ENCODE measurements at regions of chr1 and their contacts with region 1.

Region 1: DNA sequence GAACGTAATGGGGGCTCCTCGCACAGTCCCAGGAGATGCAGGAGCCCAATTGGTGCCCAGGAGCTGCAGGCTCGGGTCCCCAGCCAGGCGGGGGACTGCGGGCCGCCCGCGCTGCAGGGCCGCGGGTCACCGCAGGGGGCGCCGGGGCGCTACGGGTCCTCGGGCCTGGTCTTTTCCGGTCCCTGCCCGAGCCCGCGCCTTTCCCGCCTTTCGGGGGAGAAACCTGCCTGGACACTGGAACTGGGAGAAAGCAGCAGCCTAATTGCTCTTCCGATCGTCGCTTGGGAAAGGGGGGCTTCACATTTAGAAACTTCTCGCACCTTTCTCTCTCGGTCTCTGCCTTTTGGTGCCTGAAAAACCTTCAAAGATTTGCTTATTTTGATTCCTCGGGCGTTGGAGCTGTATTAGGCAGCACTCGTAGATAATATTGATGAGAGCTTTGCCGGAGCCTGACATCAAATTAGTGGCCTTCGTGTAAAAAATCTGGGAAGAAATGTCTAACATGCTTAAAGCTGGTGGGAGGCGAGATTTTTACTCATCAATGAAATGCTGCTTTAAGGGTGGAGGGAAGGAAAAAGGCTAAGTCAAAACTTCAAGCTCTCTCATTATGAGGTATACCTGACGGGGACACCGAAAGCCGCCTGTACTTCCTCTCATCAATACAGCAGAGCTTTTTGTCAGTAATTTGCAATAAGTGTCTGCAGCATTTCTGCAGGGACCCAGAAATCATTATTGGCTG is 12.6 kb upstream of the BARHL2 start:
- DNase-seq: no peak
- ATAC-seq: no peak
- H3K4me3 ChIP-seq: no peak overlapping the region
- H3K27ac ChIP-seq: no peak overlapping the region
- H3K4me1 ChIP-seq: 0 out of 2 replicates have a peak, but pooled peaks cover 7% of the 10 kb centered on the region
- H3K27me3 ChIP-seq: peaks cover 98% of the 10 kb centered on the region
- CTCF ChIP-seq: no peak

Region 2: GRCh38 chr1:90850898-90851710 is 121.4 kb after region 1 on chr1:
- CTCF ChIA-PET with region 1: no interaction called
- POLR2A ChIA-PET with region 1: no interaction called
- intact Hi-C with region 1: loop called (anchors 10 kb)
- DNase-seq: peak; percentile 74
- ATAC-seq: peak; percentile 98
- H3K4me3 ChIP-seq: peak overlapping the region; percentile 70
- H3K27ac ChIP-seq: no peak overlapping the region
- H3K4me1 ChIP-seq: peaks cover 10% of the 10 kb centered on the region
- H3K27me3 ChIP-seq: peaks cover 32% of the 10 kb centered on the region; the same call in 1 of the 2 replicates
- CTCF ChIP-seq: peak; percentile 47

Region 3: GRCh38 chr1:90989990-90990389 is 260.3 kb after region 1 on chr1:
- CTCF ChIA-PET with region 1: no interaction called
- POLR2A ChIA-PET with region 1: no interaction called
- intact Hi-C with region 1: no loop called
- DNase-seq: no peak
- ATAC-seq: no peak
- H3K4me3 ChIP-seq: no peak overlapping the region
- H3K27ac ChIP-seq: no peak overlapping the region
- H3K4me1 ChIP-seq: no peaks in the 10 kb centered on the region
- H3K27me3 ChIP-seq: no peaks in the 10 kb centered on the region
- CTCF ChIP-seq: no peak